PC-3 (cell line): ENCODE measurements at regions of chr10 and their contacts with region 1.

Region 1: GRCh38 chr10:79068562-79069324 is at the start of gene ZMIZ1:
- DNase-seq: peak; percentile 100
- ATAC-seq: peak; percentile 47
- H3K4me3 ChIP-seq: peak within 1 kb of the TSS; percentile 66
- H3K27ac ChIP-seq: peak within 1 kb of the TSS; percentile 3
- H3K4me1 ChIP-seq: peaks cover 34% of the 10 kb centered on the region
- H3K27me3 ChIP-seq: no peaks in the 10 kb centered on the region
- CTCF ChIP-seq: peak; percentile 57
- total RNA-seq, gene ZMIZ1: 55.4 and 84.2 TPM in 2 replicates

Region 2: DNA sequence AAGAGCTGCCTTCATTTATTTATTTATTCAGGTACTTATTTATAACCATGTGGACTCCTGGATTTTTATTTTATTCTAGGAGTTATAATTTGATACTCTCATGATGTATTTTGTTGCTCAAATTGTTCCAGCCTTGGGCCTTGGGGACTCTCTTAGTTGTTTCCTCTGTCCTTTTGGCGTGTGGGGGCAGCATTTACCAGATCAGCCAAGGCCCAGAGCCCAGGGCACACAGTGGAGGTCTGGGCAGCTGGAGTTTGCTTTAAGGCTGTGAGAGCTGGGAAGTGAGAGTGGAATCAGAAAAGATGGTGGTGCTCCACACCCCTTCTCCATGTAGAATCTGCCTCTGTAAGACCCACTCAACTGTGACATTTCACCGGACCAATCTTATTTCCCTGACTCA is 636.2 kb before region 1 on chr10:
- CTCF ChIA-PET with region 1: no interaction called
- POLR2A ChIA-PET with region 1: no interaction called
- intact Hi-C with region 1: loop called (anchors 5 kb)
- DNase-seq: peak; percentile 69
- ATAC-seq: peak; percentile 79
- H3K4me3 ChIP-seq: no peak overlapping the region
- H3K27ac ChIP-seq: no peak overlapping the region
- H3K4me1 ChIP-seq: peaks cover 13% of the 10 kb centered on the region
- H3K27me3 ChIP-seq: peaks cover 39% of the 10 kb centered on the region
- CTCF ChIP-seq: peak; percentile 78

Region 3: GRCh38 chr10:78690354-78691111 is 378.2 kb before region 1 on chr10:
- CTCF ChIA-PET with region 1: no interaction called
- POLR2A ChIA-PET with region 1: interaction called, 17 read pairs
- intact Hi-C with region 1: no loop called
- DNase-seq: no peak
- ATAC-seq: no peak
- H3K4me3 ChIP-seq: no peak overlapping the region
- H3K27ac ChIP-seq: no peak overlapping the region
- H3K4me1 ChIP-seq: no peaks in the 10 kb centered on the region
- H3K27me3 ChIP-seq: no peaks in the 10 kb centered on the region
- CTCF ChIP-seq: no peak

Region 4: DNA sequence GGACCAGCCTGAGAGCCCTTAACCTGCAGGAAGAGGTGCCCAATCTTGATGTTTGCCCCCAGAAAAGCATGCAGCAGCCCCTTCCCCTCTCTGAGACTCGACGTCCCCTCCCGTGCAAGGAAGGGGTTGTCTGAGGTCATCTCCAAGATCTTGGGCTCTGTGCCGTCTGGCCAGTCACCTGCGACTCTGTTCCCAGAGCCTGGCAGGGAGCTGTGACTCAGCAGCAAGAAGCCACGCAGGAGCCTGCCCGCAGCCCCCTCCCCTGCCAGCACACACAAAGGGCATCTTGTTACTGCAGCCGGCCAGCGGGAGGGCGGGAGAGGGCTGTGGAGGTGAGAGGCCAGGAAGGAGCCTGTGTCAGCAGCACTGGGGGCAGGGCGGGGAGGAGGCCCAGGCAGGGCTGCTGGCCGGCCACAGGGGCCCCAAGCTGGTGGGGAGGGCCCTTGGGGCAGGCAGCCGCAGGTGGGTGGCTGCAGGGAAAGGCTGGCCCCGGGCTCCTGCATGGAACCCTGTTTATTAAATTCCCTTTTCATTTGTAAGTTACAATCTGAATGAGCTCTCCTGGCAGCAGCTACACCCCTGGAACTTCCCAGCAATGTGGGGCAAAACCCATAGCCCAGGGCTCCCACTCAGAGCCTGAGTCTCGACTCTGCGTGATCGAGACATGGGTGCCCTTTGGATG is 103.7 kb before region 1 on chr10:
- CTCF ChIA-PET with region 1: interaction called, 5 read pairs
- POLR2A ChIA-PET with region 1: interaction called, 11 read pairs
- intact Hi-C with region 1: loop called (anchors 2 kb)
- DNase-seq: peak; percentile 100
- ATAC-seq: peak; percentile 93
- H3K4me3 ChIP-seq: peak overlapping the region; percentile 2; the same call in 1 of the 2 replicates
- H3K27ac ChIP-seq: peak overlapping the region; percentile 66
- H3K4me1 ChIP-seq: peaks cover 37% of the 10 kb centered on the region
- H3K27me3 ChIP-seq: no peaks in the 10 kb centered on the region
- CTCF ChIP-seq: no peak

Region 5: GRCh38 chr10:79045566-79046175 is 23.1 kb before region 1 on chr10:
- CTCF ChIA-PET with region 1: no interaction called
- POLR2A ChIA-PET with region 1: no interaction called
- intact Hi-C with region 1: no loop called
- DNase-seq: no peak
- ATAC-seq: no peak
- H3K4me3 ChIP-seq: no peak overlapping the region
- H3K27ac ChIP-seq: no peak overlapping the region
- H3K4me1 ChIP-seq: peaks cover 19% of the 10 kb centered on the region
- H3K27me3 ChIP-seq: peaks cover 30% of the 10 kb centered on the region
- CTCF ChIP-seq: no peak

Region 6: GRCh38 chr10:79127151-79127961 is 58.6 kb after region 1 on chr10:
- CTCF ChIA-PET with region 1: no interaction called
- POLR2A ChIA-PET with region 1: interaction called, 3 read pairs
- intact Hi-C with region 1: loop called (anchors 1 kb)
- DNase-seq: peak; percentile 100
- ATAC-seq: peak; percentile 90
- H3K4me3 ChIP-seq: no peak overlapping the region
- H3K27ac ChIP-seq: peak overlapping the region; percentile 62
- H3K4me1 ChIP-seq: peaks cover 41% of the 10 kb centered on the region
- H3K27me3 ChIP-seq: no peaks in the 10 kb centered on the region
- CTCF ChIP-seq: peak; percentile 54; the same call in 1 of the 2 replicates

Region 7: GRCh38 chr10:79298403-79299244 is 229.9 kb after region 1 on chr10:
- CTCF ChIA-PET with region 1: no interaction called
- POLR2A ChIA-PET with region 1: no interaction called
- intact Hi-C with region 1: loop called (anchors 5 kb)
- DNase-seq: peak; percentile 100
- ATAC-seq: peak; percentile 93
- H3K4me3 ChIP-seq: no peak overlapping the region
- H3K27ac ChIP-seq: peak overlapping the region; percentile 56
- H3K4me1 ChIP-seq: peaks cover 44% of the 10 kb centered on the region
- H3K27me3 ChIP-seq: no peaks in the 10 kb centered on the region
- CTCF ChIP-seq: no peak